CD4-positive, alpha-beta T cell (primary cell): ENCODE measurements at regions of chr15 and their contacts with region 1.

Region 1: GRCh38 chr15:48800811-48801455 is 9.9 kb downstream of the CEP152 start:
- DNase-seq: peak in 2 of 14 experiments; percentile 9 to 20
- ATAC-seq: no peak
- H3K4me3 ChIP-seq: no peak overlapping the region
- H3K4me3 Mint-ChIP-seq: no peak overlapping the region
- H3K27ac ChIP-seq: no peak overlapping the region
- H3K27ac Mint-ChIP-seq: no peak overlapping the region
- H3K4me1 ChIP-seq: no peaks in the 10 kb centered on the region
- H3K4me1 Mint-ChIP-seq: peaks cover 15% of the 10 kb centered on the region
- H3K27me3 ChIP-seq: no peaks in the 10 kb centered on the region
- H3K27me3 Mint-ChIP-seq: no peaks in the 10 kb centered on the region
- CTCF ChIP-seq: no peak

Region 2: DNA sequence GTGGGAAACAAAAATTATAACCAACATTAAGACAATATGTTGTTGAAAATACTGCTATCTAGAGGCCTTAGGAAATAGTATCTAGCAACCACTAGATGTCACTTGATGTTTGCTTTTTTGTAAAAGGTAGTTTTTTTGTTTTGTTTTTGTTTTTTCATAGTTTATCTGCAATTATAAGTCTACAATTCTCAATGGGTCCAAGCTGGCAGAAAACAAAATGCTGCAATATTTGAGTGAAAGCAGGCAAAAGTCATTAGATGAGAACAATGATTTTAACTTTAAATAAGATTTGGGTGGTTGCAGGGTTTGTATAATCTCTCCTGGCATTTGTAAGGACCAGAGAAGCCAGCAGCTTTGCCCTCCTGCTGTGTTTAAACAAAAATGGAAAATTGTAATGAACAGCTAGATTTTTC is 442.7 kb before region 1 on chr15:
- CTCF ChIA-PET with region 1: no interaction called
- POLR2A ChIA-PET with region 1: no interaction called
- intact Hi-C with region 1: loop called in 1 of 2 experiments (anchors 5 kb)
- DNase-seq: peak in 2 of 14 experiments; percentile 4
- ATAC-seq: no peak
- H3K4me3 ChIP-seq: no peak overlapping the region
- H3K4me3 Mint-ChIP-seq: no peak overlapping the region
- H3K27ac ChIP-seq: no peak overlapping the region
- H3K27ac Mint-ChIP-seq: no peak overlapping the region
- H3K4me1 ChIP-seq: no peaks in the 10 kb centered on the region
- H3K4me1 Mint-ChIP-seq: peaks cover 10% of the 10 kb centered on the region
- H3K27me3 ChIP-seq: no peaks in the 10 kb centered on the region
- H3K27me3 Mint-ChIP-seq: peaks cover under 1% of the 10 kb centered on the region
- CTCF ChIP-seq: peak; percentile 44

Region 3: DNA sequence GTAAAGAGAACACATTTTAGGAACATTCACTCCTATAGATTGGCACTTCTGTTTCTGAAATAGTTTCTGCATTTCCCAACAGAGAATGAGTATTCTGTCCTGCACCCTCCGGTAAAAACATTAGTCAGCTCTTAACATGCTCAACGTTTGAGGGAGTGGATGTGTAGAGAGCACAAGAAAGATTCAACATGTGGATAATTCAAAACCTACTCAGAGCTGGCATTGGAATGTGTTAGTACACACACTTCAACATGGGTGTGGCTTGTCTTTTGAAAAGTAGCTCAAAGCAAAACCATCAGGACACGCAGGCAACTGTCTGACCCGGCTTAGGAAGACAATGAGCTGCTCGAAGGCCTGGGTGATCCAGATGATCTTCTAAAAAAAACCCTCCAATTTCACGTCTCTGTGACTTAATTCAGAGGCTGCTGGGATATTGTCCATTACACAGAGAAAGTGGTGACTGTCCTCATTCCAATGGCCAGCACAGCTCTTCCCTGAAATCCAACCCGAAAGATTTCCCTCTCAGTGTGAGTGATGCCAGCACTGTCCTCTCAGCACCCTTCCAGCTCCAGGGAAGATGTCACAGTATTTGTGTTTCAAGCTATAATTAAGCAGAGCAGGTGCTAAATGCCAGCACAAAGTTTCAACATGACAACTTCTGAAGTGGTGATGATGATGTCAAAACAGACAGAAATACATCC is 173.5 kb before region 1 on chr15:
- CTCF ChIA-PET with region 1: no interaction called
- POLR2A ChIA-PET with region 1: no interaction called
- intact Hi-C with region 1: no loop called
- DNase-seq: no peak
- ATAC-seq: no peak
- H3K4me3 ChIP-seq: no peak overlapping the region
- H3K4me3 Mint-ChIP-seq: no peak overlapping the region
- H3K27ac ChIP-seq: no peak overlapping the region
- H3K27ac Mint-ChIP-seq: no peak overlapping the region
- H3K4me1 ChIP-seq: no peaks in the 10 kb centered on the region
- H3K4me1 Mint-ChIP-seq: no peaks in the 10 kb centered on the region
- H3K27me3 ChIP-seq: no peaks in the 10 kb centered on the region
- H3K27me3 Mint-ChIP-seq: peaks cover 4% of the 10 kb centered on the region
- CTCF ChIP-seq: no peak

Region 4: GRCh38 chr15:49538520-49538919 is 737.6 kb after region 1 on chr15:
- CTCF ChIA-PET with region 1: no interaction called
- POLR2A ChIA-PET with region 1: no interaction called
- intact Hi-C with region 1: no loop called
- DNase-seq: no peak
- ATAC-seq: no peak
- H3K4me3 ChIP-seq: no peak overlapping the region
- H3K4me3 Mint-ChIP-seq: no peak overlapping the region
- H3K27ac ChIP-seq: no peak overlapping the region
- H3K27ac Mint-ChIP-seq: no peak overlapping the region
- H3K4me1 ChIP-seq: no peaks in the 10 kb centered on the region
- H3K4me1 Mint-ChIP-seq: no peaks in the 10 kb centered on the region
- H3K27me3 ChIP-seq: no peaks in the 10 kb centered on the region
- H3K27me3 Mint-ChIP-seq: no peaks in the 10 kb centered on the region
- CTCF ChIP-seq: no peak